Heart right ventricle (tissue), 16 donors: ENCODE measurements at regions of chr16 and their contacts with region 1.

Region 1: GRCh38 chr16:24975428-24975889 is 39.7 kb downstream of the ARHGAP17 start:
- DNase-seq: no peak
- ATAC-seq: peak in 1 of 8 donors; percentile 18
- H3K4me3 ChIP-seq: no peak overlapping the region
- H3K27ac ChIP-seq: peak overlapping the region in 2 of 10 donors; percentile 34 to 90
- H3K4me1 ChIP-seq: peaks cover 14 to 91% (median 74%) of the 10 kb centered on the region in 9 donors
- H3K27me3 ChIP-seq: no peaks in the 10 kb centered on the region
- CTCF ChIP-seq: no peak

Region 2: DNA sequence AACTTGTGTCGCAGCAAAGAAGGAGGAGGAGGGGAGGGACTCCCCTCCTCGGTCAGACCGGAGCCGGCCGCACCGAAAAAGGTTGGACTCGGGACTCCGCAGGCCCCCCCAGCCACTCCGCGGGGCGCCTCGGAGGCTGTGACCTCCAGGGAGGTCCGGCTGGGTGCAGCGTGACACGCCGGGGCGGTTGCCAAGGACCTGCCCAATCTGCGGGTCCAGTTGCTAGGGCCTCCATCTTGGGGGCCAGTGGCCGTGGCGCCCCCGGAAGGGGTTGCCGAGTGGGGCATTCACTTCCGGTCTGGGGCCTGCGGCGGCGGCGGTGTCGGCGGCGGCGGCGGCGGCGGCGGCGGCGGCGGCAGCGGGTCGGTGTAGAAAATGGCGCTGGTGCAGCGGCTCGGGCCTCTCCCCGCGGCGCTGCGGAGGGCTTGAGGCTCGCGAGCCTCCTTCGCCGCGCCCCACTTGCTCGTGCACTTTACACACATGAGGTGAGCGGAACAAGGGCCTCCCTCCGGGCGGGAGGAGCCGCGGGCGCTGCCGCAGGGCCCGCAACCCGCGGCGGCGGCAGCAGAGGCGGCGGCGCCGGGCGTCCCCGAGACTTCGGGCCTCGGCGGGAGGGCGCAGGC is 246.0 kb before region 1 on chr16 and contains the start of gene TNRC6A:
- intact Hi-C with region 1: no loop called
- DNase-seq: peak; percentile 90 to 93
- ATAC-seq: peak; percentile 93 to 98 (median 96)
- H3K4me3 ChIP-seq: peak within 1 kb of the TSS; percentile 57 to 90 (median 83)
- H3K27ac ChIP-seq: peak within 1 kb of the TSS; percentile 77 to 98 (median 96)
- H3K4me1 ChIP-seq: peaks cover 5 to 44% (median 38%) of the 10 kb centered on the region in 9 donors
- H3K27me3 ChIP-seq: no peaks in the 10 kb centered on the region
- CTCF ChIP-seq: no peak
- total RNA-seq, gene TNRC6A: 31.6 to 51.4 (median 37.3) TPM

Region 3: DNA sequence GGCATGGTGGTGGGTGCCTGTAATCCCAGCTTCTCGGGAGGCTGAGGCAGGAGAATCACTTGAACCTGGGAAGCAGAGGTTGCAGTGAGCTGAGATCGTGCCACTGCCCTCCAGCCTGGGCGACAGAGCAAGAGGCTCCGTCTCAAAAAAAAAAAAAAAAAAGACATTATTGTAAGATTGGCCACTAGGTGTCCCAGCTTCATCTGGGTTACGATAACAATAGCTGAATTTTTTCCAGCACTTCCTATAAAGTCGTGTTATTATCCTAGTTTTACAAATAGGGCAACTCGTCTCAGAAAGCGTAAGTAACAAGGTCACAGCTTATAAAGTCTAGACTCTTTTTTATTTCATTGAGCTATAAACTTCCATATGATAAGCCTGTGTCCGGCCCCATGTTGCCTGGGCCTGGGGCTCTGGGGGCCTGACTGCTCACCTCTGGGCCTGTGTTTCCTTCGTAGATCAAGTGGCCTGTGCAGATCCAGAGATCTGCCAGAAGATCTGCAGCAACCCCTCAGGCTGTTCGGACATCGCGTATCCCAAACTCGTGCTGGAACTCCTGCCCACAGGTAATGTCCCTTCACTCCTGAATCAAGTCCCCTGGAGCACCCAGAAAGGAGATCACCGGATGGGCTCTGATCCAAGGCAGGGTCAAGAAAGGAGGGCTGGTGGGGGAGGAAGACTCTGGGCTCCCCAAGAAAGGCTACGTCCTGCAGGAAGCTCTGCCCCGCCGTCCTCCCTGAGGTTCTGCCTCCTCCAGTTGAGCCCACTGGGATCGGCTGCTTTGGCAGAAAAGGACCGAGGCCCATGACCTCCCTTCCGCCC is 69.0 kb before region 1 on chr16:
- intact Hi-C with region 1: no loop called
- DNase-seq: no peak
- ATAC-seq: no peak
- H3K4me3 ChIP-seq: no peak overlapping the region
- H3K27ac ChIP-seq: no peak overlapping the region
- H3K4me1 ChIP-seq: peaks cover 0 to 6% (median 0%) of the 10 kb centered on the region in 9 donors
- H3K27me3 ChIP-seq: no peaks in the 10 kb centered on the region
- CTCF ChIP-seq: peak; percentile 13 to 57 (median 42)

Region 4: GRCh38 chr16:25031441-25032307 is 56.2 kb after region 1 on chr16:
- intact Hi-C with region 1: loop called in 1 of 10 experiments (anchors 10 kb)
- DNase-seq: peak; percentile 84 to 94
- ATAC-seq: peak; percentile 98 to 100 (median 99)
- H3K4me3 ChIP-seq: peak overlapping the region; percentile 67 to 99 (median 78)
- H3K27ac ChIP-seq: peak overlapping the region in 9 of 10 donors; percentile 36 to 79 (median 70)
- H3K4me1 ChIP-seq: peaks cover 0 to 21% (median 13%) of the 10 kb centered on the region in 9 donors
- H3K27me3 ChIP-seq: no peaks in the 10 kb centered on the region
- CTCF ChIP-seq: peak in 3 of 9 donors; percentile 18 to 25 (median 19)

Region 5: GRCh38 chr16:25045696-25046381 is 70.4 kb after region 1 on chr16:
- intact Hi-C with region 1: loop called in 1 of 10 experiments (anchors 5 kb)
- DNase-seq: no peak
- ATAC-seq: no peak
- H3K4me3 ChIP-seq: no peak overlapping the region
- H3K27ac ChIP-seq: no peak overlapping the region
- H3K4me1 ChIP-seq: peaks cover 0 to 31% (median 15%) of the 10 kb centered on the region in 9 donors
- H3K27me3 ChIP-seq: no peaks in the 10 kb centered on the region
- CTCF ChIP-seq: no peak

Region 6: DNA sequence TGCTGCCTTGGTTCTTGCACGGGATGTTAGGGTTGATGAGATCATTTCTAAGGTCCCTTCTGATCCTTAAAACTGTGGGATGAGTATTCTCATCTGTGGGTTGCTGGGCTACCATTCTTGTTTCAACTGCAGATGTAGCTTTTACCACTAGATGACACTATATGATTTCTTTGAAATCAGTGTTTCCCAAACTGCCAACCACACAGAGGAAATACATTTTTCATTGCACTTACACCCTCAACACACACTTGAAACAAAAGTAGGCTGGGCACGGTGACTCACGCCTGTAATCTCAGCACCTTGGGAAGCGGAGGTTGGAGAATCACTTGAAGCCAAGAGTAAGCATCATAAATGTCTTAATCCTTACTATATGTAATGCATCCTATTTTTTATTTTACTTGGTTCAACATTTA is 151.4 kb after region 1 on chr16:
- intact Hi-C with region 1: no loop called
- DNase-seq: no peak
- ATAC-seq: peak in 2 of 8 donors; percentile 29 to 37
- H3K4me3 ChIP-seq: no peak overlapping the region
- H3K27ac ChIP-seq: no peak overlapping the region
- H3K4me1 ChIP-seq: peaks cover 0 to 19% (median 0%) of the 10 kb centered on the region in 9 donors
- H3K27me3 ChIP-seq: no peaks in the 10 kb centered on the region
- CTCF ChIP-seq: peak in 7 of 9 donors; percentile 25 to 61 (median 40)